ENCODE measurements at regions of chr4 and their contacts with region 1.

Region 1: DNA sequence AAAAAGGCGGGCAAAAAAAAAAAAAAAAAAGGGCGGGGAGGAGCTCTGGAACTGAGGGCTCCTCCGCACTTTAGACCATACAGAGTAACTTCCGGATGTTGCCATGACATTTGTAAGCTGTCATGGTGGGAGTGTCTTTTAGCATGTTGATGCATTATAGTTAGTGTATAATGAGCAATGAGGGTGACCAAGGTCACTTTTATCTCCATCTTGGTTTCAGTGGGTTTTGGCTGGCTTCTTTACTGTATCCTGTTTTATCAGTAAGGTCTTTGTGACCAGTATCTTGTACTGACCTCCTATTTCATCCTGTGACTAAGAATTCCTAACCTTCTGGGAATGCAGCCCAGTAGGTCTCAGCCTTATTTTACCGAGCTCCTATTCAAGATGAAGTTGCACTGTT is 193.4 kb downstream of the UGT8 start:
- DNase-seq: no peak
- ATAC-seq: no peak
- H3K4me3 Mint-ChIP-seq: no peak overlapping the region
- H3K27ac Mint-ChIP-seq: no peak overlapping the region
- H3K4me1 Mint-ChIP-seq: no peaks in the 10 kb centered on the region
- H3K27me3 Mint-ChIP-seq: no peaks in the 10 kb centered on the region

Region 2: GRCh38 chr4:114626207-114626606 is 165.8 kb before region 1 on chr4:
- CTCF ChIA-PET with region 1: no interaction called
- POLR2A ChIA-PET with region 1: no interaction called
- DNase-seq: no peak
- ATAC-seq: no peak
- H3K4me3 Mint-ChIP-seq: no peak overlapping the region
- H3K27ac Mint-ChIP-seq: no peak overlapping the region
- H3K4me1 Mint-ChIP-seq: no peaks in the 10 kb centered on the region
- H3K27me3 Mint-ChIP-seq: no peaks in the 10 kb centered on the region

Region 3: DNA sequence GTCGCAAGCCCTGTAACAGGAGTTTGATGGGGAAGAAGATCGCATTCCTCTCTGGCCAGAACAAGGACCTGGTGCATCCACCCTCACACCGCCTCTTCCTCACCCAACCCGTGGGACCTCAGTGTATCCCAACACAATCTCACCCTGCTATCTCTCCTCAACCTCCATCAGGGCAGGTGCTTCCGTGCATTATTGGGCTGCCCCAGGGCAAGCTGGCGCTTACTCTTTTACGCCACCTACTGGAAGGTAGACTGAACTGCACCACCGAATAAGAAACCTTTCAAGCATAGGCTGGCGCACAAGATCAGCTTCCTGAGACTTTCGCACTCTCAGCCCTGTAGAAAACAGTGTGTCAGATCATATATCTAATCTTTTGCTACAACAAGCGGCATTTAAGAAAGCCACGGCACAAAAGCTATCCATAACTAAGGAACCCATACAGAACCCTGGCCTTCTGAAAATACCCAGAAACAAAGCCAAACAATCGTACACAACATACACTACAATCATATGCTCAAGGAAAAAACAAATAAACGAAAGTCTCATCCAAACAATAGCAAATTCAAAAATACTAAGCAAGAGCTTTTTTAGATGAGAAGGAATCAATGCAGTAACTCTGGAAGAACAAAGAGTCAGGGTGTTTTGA is 15.9 kb after region 1 on chr4:
- CTCF ChIA-PET with region 1: interaction called, 28 read pairs
- POLR2A ChIA-PET with region 1: no interaction called
- DNase-seq: peak; percentile 52
- ATAC-seq: peak; percentile 90
- H3K4me3 Mint-ChIP-seq: no peak overlapping the region
- H3K27ac Mint-ChIP-seq: no peak overlapping the region
- H3K4me1 Mint-ChIP-seq: peaks cover 2% of the 10 kb centered on the region
- H3K27me3 Mint-ChIP-seq: no peaks in the 10 kb centered on the region

Measured in activated CD8-positive, alpha-beta T cell treated with anti-CD3 and anti-CD28 coated beads, Interleukin-2, amount 10 ng/mL, durations not matched to agents 7 days and 5 days (primary cell).